Sciatic nerve (tissue), 2 donors: ENCODE measurements at regions of chr11 and their contacts with region 1.

Region 1: GRCh38 chr11:100930185-100930778 is 199.3 kb downstream of the PGR start:
- DNase-seq: no peak
- ATAC-seq: peak; percentile 80

Region 2: DNA sequence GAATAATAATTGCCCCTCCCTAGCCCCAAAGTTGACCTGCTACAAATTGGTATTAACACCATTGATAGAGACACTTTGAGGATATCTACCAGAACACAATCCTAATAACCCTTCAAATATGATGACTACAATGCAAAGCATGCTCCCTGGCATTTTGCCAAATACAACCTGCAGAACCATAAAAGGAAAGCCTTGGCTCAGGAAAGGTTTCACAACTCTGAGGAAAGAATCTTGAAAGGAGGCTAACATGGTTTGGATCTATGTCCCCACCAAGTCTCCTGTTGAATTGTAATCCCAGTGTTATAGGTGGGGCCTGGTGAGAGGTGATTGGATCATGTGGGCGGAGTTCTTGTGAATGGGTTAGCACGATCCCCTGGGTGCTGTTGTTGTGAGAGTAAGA is 383.6 kb before region 1 on chr11:
- intact Hi-C with region 1: no loop called
- DNase-seq: no peak
- ATAC-seq: no peak

Region 3: DNA sequence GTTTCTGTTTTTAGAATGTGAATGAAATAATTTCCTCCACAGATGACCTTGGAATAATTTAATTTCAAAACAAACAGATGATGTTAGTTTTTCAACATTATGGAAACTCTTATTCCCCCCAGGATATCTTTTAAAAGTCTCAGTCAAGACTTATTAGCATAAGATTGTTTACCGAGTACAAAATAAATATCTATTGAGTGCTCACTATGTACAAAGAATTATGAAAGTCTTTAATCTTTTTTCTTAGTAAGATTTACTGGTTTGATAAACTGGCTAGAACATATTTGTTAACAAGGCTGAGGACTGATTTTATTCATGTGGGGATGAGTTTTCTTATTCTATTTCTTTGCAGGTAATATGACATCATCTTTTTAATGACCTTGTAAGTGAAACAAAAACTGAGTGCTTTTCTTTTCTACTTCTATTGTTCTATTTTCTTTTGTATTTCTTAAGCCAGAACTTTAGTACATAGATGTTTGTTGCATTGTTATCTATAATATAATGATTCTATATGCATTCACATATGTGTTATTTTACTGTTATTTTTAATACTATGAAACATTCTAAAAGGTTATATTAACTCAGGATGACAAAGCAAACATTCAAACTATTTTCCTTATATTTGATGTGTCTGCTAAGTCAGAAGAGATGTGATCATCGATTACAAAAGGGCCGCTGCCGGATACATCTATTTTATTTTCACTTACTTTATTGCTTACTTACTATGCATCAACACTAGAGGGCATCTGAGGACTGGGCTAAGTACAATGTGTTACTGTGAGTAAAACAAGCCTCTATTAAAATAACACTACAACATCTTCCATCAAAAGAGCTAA is 354.2 kb before region 1 on chr11:
- intact Hi-C with region 1: loop called (anchors 10 kb)
- DNase-seq: no peak
- ATAC-seq: peak; percentile 89

Region 4: DNA sequence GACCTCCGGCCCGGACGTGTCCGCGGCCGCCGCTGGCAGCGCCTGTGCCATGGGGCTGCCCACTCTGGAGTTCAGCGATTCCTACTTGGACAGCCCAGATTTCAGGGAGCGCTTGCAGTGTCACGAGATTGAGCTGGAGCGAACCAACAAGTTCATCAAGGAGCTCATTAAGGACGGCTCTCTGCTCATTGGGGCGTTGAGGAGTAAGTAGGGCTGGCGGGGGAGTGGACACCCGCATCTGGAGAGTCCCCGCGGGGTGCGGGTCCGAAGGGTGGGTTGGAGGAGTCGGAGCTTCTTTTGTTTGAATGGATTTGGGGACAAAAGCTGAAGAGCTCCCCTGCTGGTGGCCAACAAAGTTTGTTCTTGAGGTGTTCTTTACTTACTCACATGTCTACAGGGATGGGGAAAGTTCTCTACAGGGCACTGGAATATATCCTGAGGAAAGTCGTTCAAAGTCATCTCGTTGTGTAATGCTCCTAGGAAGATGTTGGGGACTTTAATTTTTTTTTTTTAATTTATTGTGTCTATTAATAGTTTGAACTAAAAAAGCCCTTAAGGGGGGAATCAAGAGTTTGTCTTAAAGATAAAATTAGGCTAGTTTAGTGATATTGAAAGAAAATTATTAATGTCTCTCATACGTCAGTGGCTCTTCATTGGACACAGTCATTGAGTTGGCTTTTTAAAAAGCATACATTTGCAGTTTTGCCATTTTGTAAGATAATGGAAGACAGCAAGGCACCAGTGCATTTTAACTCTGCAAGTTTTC is 242.5 kb before region 1 on chr11:
- intact Hi-C with region 1: loop called (anchors 10 kb)
- DNase-seq: peak; percentile 73
- ATAC-seq: peak; percentile 74